Heart right ventricle (tissue), 16 donors: ENCODE measurements at regions of chr14 and their contacts with region 1.

Region 1: DNA sequence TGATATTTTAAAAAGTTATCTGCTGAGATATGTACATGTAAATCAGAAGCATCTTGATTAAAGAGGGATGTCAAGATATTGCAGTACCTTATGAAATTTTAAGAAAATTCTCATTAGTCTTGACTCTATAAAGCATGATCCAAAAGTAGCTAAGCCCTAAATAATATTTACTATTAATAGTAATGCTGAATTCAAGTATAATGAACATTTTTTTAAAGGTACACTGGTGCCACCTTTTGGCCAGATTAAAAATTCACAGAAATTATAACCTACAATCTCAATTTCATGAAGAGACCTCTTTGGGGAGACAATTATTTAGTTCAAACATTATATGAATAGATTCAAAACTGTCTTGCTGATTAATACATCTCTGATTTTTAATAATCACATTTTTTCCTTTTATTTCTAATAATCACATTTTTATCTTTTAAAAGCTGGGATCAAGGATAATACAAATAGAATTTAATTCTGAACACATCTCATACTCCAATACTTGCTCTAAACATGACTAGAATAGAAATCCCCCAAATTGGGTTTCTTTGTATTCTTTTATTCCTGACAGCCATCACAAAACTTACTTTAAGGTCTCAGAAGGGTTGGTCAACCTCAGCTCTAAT is 13.4 kb downstream of the AKAP5 start:
- DNase-seq: no peak
- ATAC-seq: no peak
- H3K4me3 ChIP-seq: no peak overlapping the region
- H3K27ac ChIP-seq: no peak overlapping the region
- H3K4me1 ChIP-seq: peaks cover 0 to 5% (median 0%) of the 10 kb centered on the region in 9 donors
- H3K27me3 ChIP-seq: no peaks in the 10 kb centered on the region
- CTCF ChIP-seq: peak; percentile 12 to 68 (median 55)

Region 2: GRCh38 chr14:64303471-64303917 is 175.2 kb before region 1 on chr14:
- intact Hi-C with region 1: no loop called
- DNase-seq: no peak
- ATAC-seq: peak in 6 of 8 donors; percentile 11 to 61 (median 51)
- H3K4me3 ChIP-seq: no peak overlapping the region
- H3K27ac ChIP-seq: no peak overlapping the region
- H3K4me1 ChIP-seq: no peaks in the 10 kb centered on the region
- H3K27me3 ChIP-seq: no peaks in the 10 kb centered on the region
- CTCF ChIP-seq: peak; percentile 68 to 88 (median 77)

Region 3: DNA sequence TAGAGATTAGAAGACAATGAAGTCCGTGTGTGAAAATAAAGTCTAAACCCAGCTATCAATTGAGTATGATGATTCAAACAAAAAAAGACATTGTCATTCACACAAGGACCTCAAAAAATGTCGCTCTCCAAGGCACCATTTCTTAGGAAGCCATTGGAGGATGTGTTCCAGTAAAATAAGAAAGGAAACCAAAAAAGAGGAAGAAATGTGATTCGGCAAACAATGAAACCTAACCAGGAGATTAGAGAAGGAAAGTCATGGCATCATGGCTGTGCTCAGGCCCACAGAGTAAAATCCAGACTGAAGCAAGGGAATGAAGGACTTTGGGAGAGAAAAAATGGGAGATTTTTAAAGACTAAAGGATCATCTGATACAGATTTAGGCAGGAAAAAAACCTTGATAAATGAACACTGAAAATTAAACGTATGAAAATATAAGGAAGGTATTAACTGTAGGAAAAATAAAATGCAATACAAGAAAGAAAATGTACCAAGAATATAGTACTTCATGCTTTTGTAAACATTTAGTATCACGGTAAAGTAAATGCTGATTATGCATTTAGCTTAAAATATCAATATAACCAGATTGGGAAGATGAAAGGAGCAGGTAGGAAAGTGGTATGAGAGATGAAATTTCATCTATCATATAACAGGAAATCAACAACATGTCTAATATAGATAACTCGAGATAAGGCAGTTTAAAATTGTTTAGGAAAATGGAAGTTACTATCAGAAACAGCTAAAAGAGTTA is 128.8 kb before region 1 on chr14:
- intact Hi-C with region 1: loop called in 6 of 10 experiments (anchors 5 to 10 kb)
- DNase-seq: no peak
- ATAC-seq: no peak
- H3K4me3 ChIP-seq: no peak overlapping the region
- H3K27ac ChIP-seq: no peak overlapping the region
- H3K4me1 ChIP-seq: no peaks in the 10 kb centered on the region
- H3K27me3 ChIP-seq: no peaks in the 10 kb centered on the region
- CTCF ChIP-seq: no peak

Region 4: GRCh38 chr14:64421166-64421565 is 57.6 kb before region 1 on chr14:
- intact Hi-C with region 1: loop called in 1 of 10 experiments (anchors 5 kb)
- DNase-seq: no peak
- ATAC-seq: no peak
- H3K4me3 ChIP-seq: no peak overlapping the region
- H3K27ac ChIP-seq: no peak overlapping the region
- H3K4me1 ChIP-seq: peaks cover 0 to 11% (median 0%) of the 10 kb centered on the region in 9 donors
- H3K27me3 ChIP-seq: no peaks in the 10 kb centered on the region
- CTCF ChIP-seq: no peak

Region 5: GRCh38 chr14:64438181-64438841 is 40.4 kb before region 1 on chr14:
- intact Hi-C with region 1: loop called in 3 of 10 experiments (anchors 5 kb)
- DNase-seq: no peak
- ATAC-seq: no peak
- H3K4me3 ChIP-seq: no peak overlapping the region
- H3K27ac ChIP-seq: no peak overlapping the region
- H3K4me1 ChIP-seq: peaks cover 0 to 14% (median 10%) of the 10 kb centered on the region in 9 donors
- H3K27me3 ChIP-seq: no peaks in the 10 kb centered on the region
- CTCF ChIP-seq: no peak

Region 6: GRCh38 chr14:65594153-65594881 is 1115.6 kb after region 1 on chr14:
- intact Hi-C with region 1: no loop called
- DNase-seq: no peak
- ATAC-seq: peak in 1 of 8 donors; percentile 10
- H3K4me3 ChIP-seq: no peak overlapping the region
- H3K27ac ChIP-seq: no peak overlapping the region
- H3K4me1 ChIP-seq: peaks cover 0 to 5% (median 0%) of the 10 kb centered on the region in 9 donors
- H3K27me3 ChIP-seq: no peaks in the 10 kb centered on the region
- CTCF ChIP-seq: no peak